ENCODE measurements at regions of chr17 and their contacts with region 1.

Region 1: GRCh38 chr17:81150377-81151077 is 14.8 kb upstream of the PVALEF start:
- DNase-seq: no peak
- H3K27ac ChIP-seq: no peak overlapping the region
- CTCF ChIP-seq: no peak

Region 2: DNA sequence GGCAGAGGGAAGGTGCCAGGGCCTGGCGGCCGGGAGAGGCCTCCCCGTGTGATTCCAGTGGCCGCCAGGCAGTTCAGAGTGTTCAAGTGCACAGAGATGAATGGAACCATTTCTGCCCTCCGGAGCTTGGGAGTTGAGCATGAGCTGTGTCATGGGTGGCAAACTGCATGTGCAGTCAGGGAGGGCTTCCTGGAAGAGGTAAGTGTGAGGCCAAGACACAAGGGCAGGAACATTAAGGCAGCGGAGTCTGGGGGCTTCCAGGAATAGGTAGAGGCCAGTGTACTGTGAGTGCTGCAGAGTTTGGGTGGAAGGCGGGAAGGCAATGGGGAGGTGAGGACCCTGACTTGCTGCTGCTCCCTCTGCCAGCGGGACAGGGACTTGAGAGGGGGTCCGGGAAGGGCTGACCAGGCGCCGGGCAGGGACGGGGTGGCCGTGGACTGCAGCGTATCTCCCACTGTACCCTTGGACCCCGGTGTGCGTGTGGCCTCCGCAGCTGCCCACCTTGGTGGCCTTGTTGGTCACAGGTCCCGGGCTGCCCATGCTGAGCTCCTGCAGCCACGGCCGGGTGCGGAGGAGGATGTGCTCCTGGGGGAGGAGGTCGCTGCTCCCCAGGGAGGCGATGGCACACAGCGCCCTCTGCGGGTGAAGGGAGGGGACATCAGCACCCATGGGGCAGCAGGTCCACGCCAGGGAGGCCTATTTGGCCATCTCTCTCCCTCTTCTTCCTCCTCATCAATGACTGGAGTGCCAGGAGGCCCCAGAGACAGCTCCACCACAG is 79.7 kb after region 1 on chr17:
- CTCF ChIA-PET with region 1: interaction called, 3 read pairs
- POLR2A ChIA-PET with region 1: interaction called, 14 read pairs
- DNase-seq: no peak
- H3K27ac ChIP-seq: peak overlapping the region; percentile 14; the same call in 1 of the 2 replicates
- CTCF ChIP-seq: no peak; the same call in 1 of the 2 replicates

Region 3: GRCh38 chr17:81261582-81262336 is 111.2 kb after region 1 on chr17:
- CTCF ChIA-PET with region 1: no interaction called
- POLR2A ChIA-PET with region 1: no interaction called
- DNase-seq: no peak
- H3K27ac ChIP-seq: no peak overlapping the region
- CTCF ChIP-seq: no peak